Mammary epithelial cell (primary cell): ENCODE measurements at regions of chr3 and their contacts with region 1.

Region 1: DNA sequence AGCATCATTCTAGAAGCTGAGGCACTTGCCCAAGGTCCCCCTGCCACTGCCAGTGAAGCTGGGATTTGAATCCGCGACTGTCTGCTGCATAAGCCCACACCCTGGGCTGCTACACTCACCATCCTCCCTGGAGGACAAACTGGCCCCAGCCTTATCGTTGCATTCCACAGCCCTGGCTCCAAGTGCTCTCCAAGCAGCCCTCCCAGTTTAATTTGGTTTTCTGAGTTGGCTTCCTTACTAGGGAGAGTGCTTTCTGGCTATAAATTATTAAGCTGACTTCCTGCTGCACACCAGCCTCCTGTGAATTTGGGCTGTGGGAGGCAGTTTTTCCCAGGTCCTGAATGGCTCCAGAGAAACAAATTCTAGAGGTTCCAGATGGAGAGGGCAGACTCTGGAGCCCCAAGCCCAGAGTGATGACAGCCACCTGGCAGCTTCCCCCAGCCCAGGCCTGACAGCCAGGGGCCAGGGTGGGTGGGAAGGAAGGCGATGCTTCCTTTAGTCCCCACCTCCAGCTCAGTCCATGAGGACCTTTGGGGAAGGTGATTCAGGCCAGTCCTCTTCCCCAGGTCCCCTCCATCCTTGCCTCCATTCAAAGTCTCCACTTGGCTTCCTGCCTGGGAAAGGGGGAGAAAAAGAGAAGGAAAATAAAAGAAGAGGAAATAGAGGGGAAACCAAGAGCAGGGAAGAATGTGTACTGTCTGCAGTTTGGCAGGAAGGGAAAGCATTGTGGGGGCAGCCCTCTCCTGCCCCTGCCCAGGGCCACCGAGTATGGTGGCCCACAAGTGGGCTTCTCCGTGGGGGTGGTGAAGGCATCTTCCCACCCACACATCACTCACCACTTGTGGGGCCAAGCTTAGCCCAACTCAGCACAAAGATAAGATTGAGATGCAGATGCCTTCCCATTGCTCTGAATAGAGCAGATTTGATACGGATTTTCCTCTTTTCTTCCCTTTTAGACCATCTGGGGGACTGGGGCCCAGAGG is 69.6 kb downstream of the SEMA5B start:
- DNase-seq: no peak
- H3K4me3 ChIP-seq: no peak overlapping the region
- H3K27ac ChIP-seq: no peak overlapping the region
- H3K4me1 ChIP-seq: no peaks in the 10 kb centered on the region
- H3K27me3 ChIP-seq: peaks cover 3% of the 10 kb centered on the region
- CTCF ChIP-seq: no peak

Region 2: DNA sequence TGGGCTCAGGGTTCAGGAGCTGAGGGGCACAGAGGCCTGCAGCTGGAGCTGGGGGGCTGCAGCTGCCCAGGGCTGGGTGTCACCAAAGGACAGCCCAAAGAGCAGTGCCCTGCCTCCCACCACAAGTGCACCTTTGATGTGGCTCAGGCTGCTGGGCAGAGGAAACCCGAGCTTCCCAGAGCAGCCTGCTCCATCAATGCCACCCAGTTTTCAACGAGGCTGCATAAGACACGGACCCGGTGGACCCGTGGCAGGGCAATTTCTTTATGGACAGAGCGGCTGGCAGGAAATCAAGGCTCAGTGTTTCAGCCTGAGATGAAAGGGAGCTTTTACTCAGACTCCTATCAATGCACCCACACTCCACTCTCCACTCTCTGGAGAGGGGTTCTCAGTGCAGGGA is 50.8 kb after region 1 on chr3:
- CTCF ChIA-PET with region 1: no interaction called
- dilution Hi-C with region 1: loop called (anchors 5 kb)
- in situ Hi-C with region 1: no loop called
- intact Hi-C with region 1: no loop called
- DNase-seq: no peak
- H3K4me3 ChIP-seq: no peak overlapping the region
- H3K27ac ChIP-seq: no peak overlapping the region
- H3K4me1 ChIP-seq: no peaks in the 10 kb centered on the region
- H3K27me3 ChIP-seq: no peaks in the 10 kb centered on the region
- CTCF ChIP-seq: no peak

Region 3: GRCh38 chr3:123169492-123169929 is 211.5 kb after region 1 on chr3:
- CTCF ChIA-PET with region 1: no interaction called
- dilution Hi-C with region 1: no loop called
- in situ Hi-C with region 1: no loop called
- intact Hi-C with region 1: no loop called
- DNase-seq: no peak
- H3K4me3 ChIP-seq: no peak overlapping the region
- H3K27ac ChIP-seq: no peak overlapping the region
- H3K4me1 ChIP-seq: no peaks in the 10 kb centered on the region
- H3K27me3 ChIP-seq: no peaks in the 10 kb centered on the region
- CTCF ChIP-seq: no peak

Region 4: GRCh38 chr3:123508178-123508577 is 550.2 kb after region 1 on chr3:
- CTCF ChIA-PET with region 1: no interaction called
- dilution Hi-C with region 1: no loop called
- in situ Hi-C with region 1: no loop called
- intact Hi-C with region 1: no loop called
- DNase-seq: no peak
- H3K4me3 ChIP-seq: no peak overlapping the region
- H3K27ac ChIP-seq: no peak overlapping the region
- H3K4me1 ChIP-seq: no peaks in the 10 kb centered on the region
- H3K27me3 ChIP-seq: no peaks in the 10 kb centered on the region
- CTCF ChIP-seq: no peak